ENCODE measurements at regions of chr13 and their contacts with region 1.

Region 1: GRCh38 chr13:33218001-33218400 is 67.6 kb downstream of the STARD13 start:
- DNase-seq: no peak
- CTCF ChIP-seq: no peak

Region 2: GRCh38 chr13:32761472-32761871 is 456.5 kb before region 1 on chr13:
- CTCF ChIA-PET with region 1: no interaction called
- POLR2A ChIA-PET with region 1: no interaction called
- DNase-seq: no peak
- CTCF ChIP-seq: no peak

Region 3: GRCh38 chr13:33072283-33072682 is 145.7 kb before region 1 on chr13:
- CTCF ChIA-PET with region 1: no interaction called
- POLR2A ChIA-PET with region 1: no interaction called
- DNase-seq: no peak
- CTCF ChIP-seq: no peak

Region 4: DNA sequence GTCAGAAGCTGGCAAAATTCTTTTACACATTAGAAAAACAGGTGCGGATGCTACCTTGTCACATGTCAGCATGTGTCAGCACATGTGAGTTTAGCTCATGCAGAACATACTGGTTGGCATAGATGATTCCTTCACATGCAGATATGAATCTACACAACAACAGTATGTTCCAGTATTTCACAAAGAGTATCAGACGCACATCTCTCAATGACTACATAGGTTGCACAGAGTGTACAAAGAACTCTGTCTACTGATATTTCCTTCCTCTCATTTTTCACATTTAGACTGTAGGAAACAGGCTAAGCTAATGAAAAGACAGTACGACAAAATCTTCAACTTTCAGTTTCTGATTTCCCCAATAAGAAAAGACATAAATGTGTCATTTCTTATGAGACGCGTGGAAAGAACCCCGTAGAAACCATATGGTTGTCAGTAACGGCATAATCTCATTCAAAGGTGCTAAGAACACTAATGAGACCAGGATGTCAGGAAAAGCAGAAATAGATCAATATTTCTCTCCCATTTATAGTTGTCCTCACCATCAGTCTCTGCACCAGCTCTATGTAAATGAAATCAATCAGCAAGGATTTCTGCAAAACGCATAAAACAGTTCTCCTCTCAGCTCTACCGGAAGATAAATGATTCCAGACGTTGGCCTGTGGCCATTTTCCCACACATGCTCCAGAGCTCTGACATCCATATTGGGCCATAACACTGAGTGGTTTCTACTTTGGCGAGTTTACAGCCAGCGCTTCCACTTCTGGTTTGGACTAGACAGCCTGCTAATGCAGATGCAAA is 13.7 kb before region 1 on chr13:
- CTCF ChIA-PET with region 1: interaction called, 13 read pairs
- POLR2A ChIA-PET with region 1: no interaction called
- DNase-seq: no peak
- CTCF ChIP-seq: no peak

Measured in GM10248 (cell line).